Activated naive CD4-positive, alpha-beta T cell treated with anti-CD3 and anti-CD28 coated beads for 36 hours (primary cell): ENCODE measurements at regions of chr2 and their contacts with region 1.

Region 1: DNA sequence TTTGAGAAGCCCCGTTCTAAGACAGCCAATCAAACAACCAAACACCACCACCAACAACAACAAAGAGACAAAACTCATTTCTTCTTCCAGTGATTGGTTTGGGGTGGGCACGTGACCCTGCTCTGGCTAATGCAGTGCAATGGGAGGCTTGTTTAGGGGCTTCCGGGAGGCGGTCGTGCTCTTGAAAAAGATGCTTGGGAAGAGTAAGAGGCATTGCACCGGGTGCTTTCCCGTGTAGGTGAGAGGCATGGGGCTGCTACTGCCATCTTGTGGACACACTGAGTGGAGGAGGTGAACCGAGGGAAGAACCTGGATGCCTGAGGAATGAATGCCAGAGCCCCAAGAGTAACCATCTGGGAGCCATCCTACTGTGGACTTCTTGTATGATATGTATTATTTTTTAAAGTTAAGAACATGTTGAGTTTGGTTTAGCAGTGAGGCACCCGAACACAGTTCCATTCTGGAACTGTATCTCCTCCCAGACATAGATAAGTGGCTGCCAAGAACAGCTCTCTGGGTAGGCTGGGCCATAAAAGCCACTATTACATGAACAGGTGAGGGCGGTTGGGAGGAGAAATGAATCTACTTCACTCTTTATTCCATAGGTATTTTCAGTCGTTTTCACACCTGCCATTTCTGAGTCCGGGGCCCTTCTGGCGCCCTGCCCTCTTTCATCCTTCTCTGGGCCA is 19.1 kb upstream of the ARHGAP25 start:
- DNase-seq: peak; percentile 72
- H3K4me3 Mint-ChIP-seq: no peak overlapping the region
- H3K27ac Mint-ChIP-seq: peak overlapping the region; percentile 83
- H3K4me1 Mint-ChIP-seq: peaks cover 73% of the 10 kb centered on the region
- H3K27me3 Mint-ChIP-seq: no peaks in the 10 kb centered on the region

Region 2: DNA sequence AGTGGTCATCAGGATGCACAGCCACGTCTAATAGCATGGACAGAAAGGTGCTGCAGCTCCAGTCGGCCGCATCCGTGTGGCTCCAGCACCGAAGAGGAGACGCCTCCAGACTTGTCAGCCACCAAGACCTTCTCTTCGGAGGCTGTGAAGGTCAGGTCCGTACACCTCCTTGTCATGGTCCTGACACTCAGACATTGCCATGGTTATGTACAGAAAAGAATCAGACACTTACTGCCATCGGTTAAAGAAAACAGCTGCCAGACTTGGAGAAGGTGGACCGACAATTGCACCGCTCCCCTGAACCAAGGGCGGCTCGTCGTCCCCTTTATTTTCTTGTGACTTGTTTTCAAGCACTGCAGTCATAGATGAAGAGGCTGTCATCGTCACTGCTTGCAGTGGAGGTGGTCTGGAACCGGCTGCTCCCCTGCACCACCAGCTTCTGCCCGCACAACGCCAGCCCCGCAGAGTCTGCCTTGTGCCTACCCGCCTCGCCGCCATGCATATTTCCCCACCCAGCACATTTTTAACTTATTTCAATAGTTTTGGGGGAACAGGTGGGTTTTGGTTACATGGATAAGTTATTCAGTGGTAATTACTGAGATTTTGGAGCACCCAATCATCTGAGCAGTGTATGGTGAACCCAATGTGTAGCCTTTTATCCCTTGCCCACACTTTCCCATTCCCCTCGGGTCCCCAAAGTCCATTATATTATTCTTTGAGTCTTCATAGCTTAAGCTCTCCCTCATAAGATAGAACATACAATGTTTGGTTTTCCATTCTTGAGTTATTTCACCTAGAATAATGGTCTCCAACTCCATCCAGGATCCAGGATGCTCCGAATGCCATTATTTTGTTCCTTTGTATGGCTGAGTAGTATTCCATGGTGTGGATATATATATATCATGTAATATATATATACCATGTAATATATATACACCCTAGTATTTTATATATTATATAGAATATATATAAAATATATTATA is 266.5 kb before region 1 on chr2:
- CTCF ChIA-PET with region 1: no interaction called
- intact Hi-C with region 1: no loop called
- DNase-seq: no peak
- H3K4me3 Mint-ChIP-seq: no peak overlapping the region
- H3K27ac Mint-ChIP-seq: no peak overlapping the region
- H3K4me1 Mint-ChIP-seq: peaks cover 10% of the 10 kb centered on the region
- H3K27me3 Mint-ChIP-seq: no peaks in the 10 kb centered on the region

Region 3: DNA sequence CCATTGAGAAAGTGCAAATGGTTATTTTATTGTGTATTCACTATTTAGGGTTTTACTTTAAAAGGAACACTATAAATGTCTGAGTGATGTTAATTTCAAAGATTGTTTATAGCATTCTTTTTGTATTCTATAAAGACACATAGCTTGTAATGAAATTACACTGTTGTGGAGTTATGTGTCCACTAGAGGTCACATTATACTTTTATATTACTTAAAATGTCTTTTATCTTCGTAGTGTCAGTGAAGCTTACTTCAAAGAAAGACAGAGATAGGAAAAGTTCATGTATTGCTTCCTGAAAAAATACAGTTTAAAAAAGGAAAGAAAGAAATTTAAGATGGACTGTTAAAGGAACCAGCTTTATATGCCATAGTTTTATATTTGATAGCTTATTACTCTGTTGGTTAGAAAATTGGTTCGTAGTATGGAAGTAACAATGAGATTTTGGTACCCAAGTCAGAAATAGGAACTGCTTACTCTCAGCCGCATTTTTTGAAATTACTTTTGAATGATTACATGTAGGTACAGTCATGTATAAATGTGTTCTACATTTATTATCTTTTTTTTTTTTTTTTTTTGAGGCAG is 227.6 kb before region 1 on chr2:
- CTCF ChIA-PET with region 1: interaction called, 7 read pairs
- intact Hi-C with region 1: loop called (anchors 1 kb)
- DNase-seq: no peak
- H3K4me3 Mint-ChIP-seq: no peak overlapping the region
- H3K27ac Mint-ChIP-seq: no peak overlapping the region
- H3K4me1 Mint-ChIP-seq: peaks cover 2% of the 10 kb centered on the region
- H3K27me3 Mint-ChIP-seq: no peaks in the 10 kb centered on the region

Region 4: GRCh38 chr2:68662466-68662865 is 53.0 kb before region 1 on chr2:
- CTCF ChIA-PET with region 1: no interaction called
- intact Hi-C with region 1: loop called (anchors 2 kb)
- DNase-seq: no peak
- H3K4me3 Mint-ChIP-seq: no peak overlapping the region
- H3K27ac Mint-ChIP-seq: no peak overlapping the region
- H3K4me1 Mint-ChIP-seq: peaks cover 18% of the 10 kb centered on the region
- H3K27me3 Mint-ChIP-seq: peaks cover 19% of the 10 kb centered on the region

Region 5: DNA sequence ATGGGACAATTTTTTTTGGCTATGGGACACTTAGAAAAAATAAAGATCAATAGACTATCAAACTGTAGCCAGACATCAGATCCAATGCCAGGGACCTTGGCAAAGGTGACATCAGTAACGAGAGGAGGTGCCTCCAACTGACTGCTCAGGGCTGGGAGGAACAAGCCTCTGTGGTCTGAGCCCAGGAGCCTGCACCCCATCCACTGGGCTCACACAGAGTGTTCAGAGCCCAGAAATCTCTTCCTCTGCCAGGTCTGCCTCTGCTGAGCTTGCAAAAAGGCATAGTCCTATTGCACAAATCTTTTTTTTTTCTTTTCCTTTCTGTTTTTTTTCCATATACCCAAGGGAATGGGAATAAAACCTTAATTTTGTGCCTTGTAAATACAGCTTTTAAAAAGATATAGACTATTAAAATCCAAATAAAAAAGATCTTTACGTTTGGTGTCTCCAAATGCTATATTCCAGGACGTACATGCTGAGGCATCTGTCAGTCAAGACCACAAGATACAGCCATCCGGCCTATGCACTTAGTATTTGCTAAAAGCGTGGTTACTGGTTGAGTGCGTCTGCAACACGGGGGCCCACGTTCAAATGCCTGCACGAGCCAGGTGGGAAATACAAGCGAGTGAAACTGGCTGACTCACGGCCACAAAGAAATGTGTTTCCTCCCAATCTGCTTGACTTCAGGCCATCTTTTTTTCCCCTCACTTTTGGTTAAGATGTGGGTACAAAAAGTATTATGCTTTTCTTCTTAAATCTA is 11.3 kb after region 1 on chr2:
- CTCF ChIA-PET with region 1: interaction called, 19 read pairs
- intact Hi-C with region 1: loop called (anchors 1 kb)
- DNase-seq: peak; percentile 94
- H3K4me3 Mint-ChIP-seq: peak overlapping the region; percentile 11
- H3K27ac Mint-ChIP-seq: peak overlapping the region; percentile 82
- H3K4me1 Mint-ChIP-seq: peaks cover 64% of the 10 kb centered on the region
- H3K27me3 Mint-ChIP-seq: no peaks in the 10 kb centered on the region

Region 6: GRCh38 chr2:68742626-68743415 is 27.3 kb after region 1 on chr2:
- CTCF ChIA-PET with region 1: interaction called, 23 read pairs
- intact Hi-C with region 1: loop called (anchors 1 kb)
- DNase-seq: peak; percentile 45
- H3K4me3 Mint-ChIP-seq: no peak overlapping the region
- H3K27ac Mint-ChIP-seq: peak overlapping the region; percentile 91
- H3K4me1 Mint-ChIP-seq: peaks cover 93% of the 10 kb centered on the region
- H3K27me3 Mint-ChIP-seq: no peaks in the 10 kb centered on the region

Region 7: GRCh38 chr2:68766376-68766845 is 50.9 kb after region 1 on chr2:
- CTCF ChIA-PET with region 1: interaction called, 4 read pairs
- intact Hi-C with region 1: loop called (anchors 1 kb)
- DNase-seq: peak; percentile 77
- H3K4me3 Mint-ChIP-seq: peak overlapping the region; percentile 77
- H3K27ac Mint-ChIP-seq: peak overlapping the region; percentile 95
- H3K4me1 Mint-ChIP-seq: peaks cover 97% of the 10 kb centered on the region
- H3K27me3 Mint-ChIP-seq: no peaks in the 10 kb centered on the region